Right ventricle myocardium inferior (tissue), 1 donor: ENCODE measurements at regions of chr6 and their contacts with region 1.

Region 1: DNA sequence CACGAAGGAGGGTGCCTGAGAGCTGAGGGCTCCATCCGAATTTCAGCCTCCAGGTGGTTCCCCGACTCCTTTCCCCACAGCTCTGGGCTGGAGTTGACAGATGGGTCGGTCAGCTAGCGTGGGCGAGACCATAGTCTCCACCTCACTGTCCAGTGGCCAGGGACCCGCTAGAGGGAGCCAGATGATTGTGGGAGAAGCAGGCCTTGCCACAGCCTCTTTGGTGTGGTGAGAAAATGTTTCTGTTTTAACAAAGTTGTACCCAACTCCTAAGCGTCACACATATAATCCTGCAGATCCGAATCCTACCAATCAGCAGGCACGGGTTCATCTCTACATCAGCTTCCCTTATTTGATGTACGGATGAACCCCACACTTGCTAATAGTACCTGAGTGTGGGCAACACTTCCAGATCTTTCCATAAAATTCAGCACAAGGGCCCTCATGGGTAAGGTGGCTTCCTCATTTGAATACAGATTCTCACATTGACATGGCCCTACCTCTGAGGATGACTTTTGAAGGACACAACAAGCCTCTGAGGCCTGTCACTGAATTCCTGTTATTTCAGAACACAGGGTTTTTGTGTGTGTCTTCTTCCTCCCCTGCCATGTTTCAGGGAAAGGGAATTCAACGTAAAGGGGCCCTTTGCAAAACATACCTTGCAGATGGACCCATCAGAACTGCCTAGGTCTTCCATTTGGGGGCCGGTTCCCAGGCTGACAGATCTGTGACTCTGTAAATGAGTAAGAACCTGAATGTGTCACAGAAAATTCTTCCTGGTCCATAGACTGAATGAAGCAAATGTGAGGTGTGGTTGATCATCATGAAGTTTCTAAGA is 103.2 kb upstream of the DUSP22 start:
- DNase-seq: peak; percentile 92
- ATAC-seq: peak; percentile 96

Region 2: DNA sequence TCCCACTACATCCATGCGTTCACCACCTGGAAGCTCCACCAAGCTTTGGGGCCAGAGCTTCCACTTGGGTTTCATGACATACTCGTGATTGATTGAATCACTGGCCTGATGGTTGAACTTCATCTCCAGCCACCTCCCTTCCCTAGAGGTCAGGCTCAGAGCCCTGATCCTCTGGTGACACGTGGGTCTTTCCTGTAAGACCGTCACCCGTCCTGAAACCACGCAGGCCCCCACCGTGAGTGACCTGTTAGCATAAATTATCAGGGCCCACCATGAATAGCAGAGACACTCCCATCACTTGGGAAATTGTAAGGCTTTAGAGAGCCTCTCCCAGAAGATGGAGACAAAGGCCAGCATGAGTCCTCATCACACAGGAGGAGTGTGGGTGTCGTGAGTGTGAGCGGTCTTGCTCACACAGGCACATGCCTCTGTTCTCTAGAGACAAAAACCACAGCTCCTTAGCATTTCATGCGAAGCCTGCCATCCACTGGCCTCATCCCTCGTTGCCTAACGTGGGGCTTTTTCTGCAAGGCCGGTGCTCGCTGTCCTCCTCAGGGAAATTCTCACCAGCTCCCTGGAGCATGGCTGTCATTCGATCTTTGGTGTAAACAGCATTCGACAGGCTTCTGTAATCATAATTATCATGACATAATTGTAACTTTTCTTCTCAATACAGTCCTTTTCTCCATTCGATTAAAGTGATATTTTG is 38.2 kb after region 1 on chr6:
- intact Hi-C with region 1: no loop called
- DNase-seq: no peak
- ATAC-seq: no peak

Region 3: GRCh38 chr6:408599-409102 is 219.6 kb after region 1 on chr6:
- intact Hi-C with region 1: loop called (anchors 2 kb)
- DNase-seq: no peak
- ATAC-seq: peak; percentile 97